ENCODE measurements at regions of chr5 and their contacts with region 1.

Region 1: GRCh38 chr5:10441083-10441991 is at the start of gene ROPN1L:
- DNase-seq: peak; percentile 86
- ATAC-seq: peak; percentile 95
- H3K4me3 ChIP-seq: peak within 1 kb of the TSS; percentile 66 to 85 (median 70)
- H3K4me3 Mint-ChIP-seq: peak within 1 kb of the TSS; percentile 93
- H3K27ac ChIP-seq: no peak within 1 kb of the TSS
- H3K27ac Mint-ChIP-seq: peak within 1 kb of the TSS; percentile 59
- H3K4me1 ChIP-seq: peaks cover 27 to 41% of the 10 kb centered on the region in 2 donors
- H3K4me1 Mint-ChIP-seq: peaks cover 35% of the 10 kb centered on the region
- H3K27me3 ChIP-seq: peaks cover 0 to 5% (median 0%) of the 10 kb centered on the region in 4 experiments
- H3K27me3 Mint-ChIP-seq: peaks cover 4% of the 10 kb centered on the region
- CTCF ChIP-seq: no peak
- total RNA-seq, gene ROPN1L: 0.34 and 0.91 TPM in 2 replicates

Region 2: GRCh38 chr5:10249948-10250803 is 191.2 kb before region 1 on chr5 and contains the start of gene CCT5:
- CTCF ChIA-PET with region 1: interaction called, 3 read pairs
- POLR2A ChIA-PET with region 1: no interaction called
- intact Hi-C with region 1: loop called (anchors 1 kb)
- DNase-seq: peak; percentile 98
- ATAC-seq: peak; percentile 82
- H3K4me3 ChIP-seq: peak within 1 kb of the TSS; percentile 79 to 98 (median 87)
- H3K4me3 Mint-ChIP-seq: peak within 1 kb of the TSS; percentile 99
- H3K27ac ChIP-seq: peak within 1 kb of the TSS; percentile 92 to 100
- H3K27ac Mint-ChIP-seq: peak within 1 kb of the TSS; percentile 100
- H3K4me1 ChIP-seq: peaks cover 27 to 29% of the 10 kb centered on the region in 2 donors
- H3K4me1 Mint-ChIP-seq: peaks cover 42% of the 10 kb centered on the region
- H3K27me3 ChIP-seq: no peaks in the 10 kb centered on the region
- H3K27me3 Mint-ChIP-seq: no peaks in the 10 kb centered on the region
- CTCF ChIP-seq: no peak
- total RNA-seq, gene CCT5: 74.3 and 95.7 TPM in 2 replicates

Measured in B cell (primary cell).